ENCODE measurements at regions of chr18 and their contacts with region 1.

Region 1: DNA sequence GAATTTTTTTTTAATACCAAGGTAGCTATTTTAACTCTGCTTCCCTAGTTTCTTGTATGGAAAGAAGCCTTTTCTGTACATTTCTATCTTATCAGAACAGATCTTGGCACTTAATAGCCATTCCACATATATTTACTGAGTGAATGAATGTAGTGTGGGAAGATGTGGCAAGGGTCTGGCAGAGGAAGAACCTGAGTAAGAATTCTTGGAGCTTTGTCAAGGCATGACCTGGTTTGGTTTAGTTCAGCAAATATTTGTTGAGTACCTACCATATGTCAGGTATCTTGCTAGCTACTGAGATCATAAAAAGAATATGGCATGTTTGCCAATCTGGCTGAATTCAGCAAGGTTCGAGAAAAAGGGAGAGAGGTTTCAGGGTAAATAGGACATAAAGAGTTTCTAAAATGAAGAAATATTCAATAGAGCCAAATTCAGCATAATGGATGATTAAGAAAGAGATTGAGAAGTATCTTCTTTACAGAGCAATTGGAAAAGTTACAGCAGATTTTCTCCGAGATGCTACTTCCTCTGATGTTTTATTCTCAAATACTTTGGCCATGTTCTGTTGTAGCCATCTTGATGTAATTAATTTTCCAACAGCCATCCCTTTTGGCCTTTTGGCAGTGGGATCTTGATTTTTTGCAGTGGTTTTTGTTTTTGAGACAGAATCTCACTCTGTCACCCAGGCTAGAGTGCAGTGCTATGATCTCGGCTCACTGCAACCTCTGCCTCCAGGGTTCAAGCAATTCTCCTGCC is 21.7 kb upstream of the MEP1B start:
- DNase-seq: no peak
- H3K4me3 ChIP-seq: no peak overlapping the region
- H3K27ac ChIP-seq: no peak overlapping the region
- H3K4me1 ChIP-seq: no peaks in the 10 kb centered on the region
- H3K27me3 ChIP-seq: no peaks in the 10 kb centered on the region
- CTCF ChIP-seq: no peak

Region 2: DNA sequence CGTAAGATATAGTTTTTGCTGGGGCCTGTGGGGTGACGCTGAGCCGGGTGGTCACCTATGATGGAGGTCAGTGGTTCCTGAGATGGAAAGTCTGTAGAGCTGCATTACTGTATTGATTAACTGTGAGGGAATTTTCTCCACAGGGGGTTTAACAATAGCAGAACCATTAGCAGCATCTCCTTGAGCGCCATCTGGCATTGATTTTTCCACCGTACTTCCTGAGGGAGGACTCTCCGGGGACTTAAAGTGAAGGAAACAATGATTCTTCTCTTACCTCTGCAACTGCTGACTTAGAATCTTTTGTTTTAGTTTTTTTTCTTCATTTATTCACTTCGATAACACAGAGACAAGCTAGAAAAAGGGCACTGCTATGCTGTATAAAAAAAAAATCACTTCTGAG is 172.1 kb before region 1 on chr18:
- CTCF ChIA-PET with region 1: interaction called, 11 read pairs
- POLR2A ChIA-PET with region 1: no interaction called
- intact Hi-C with region 1: no loop called
- DNase-seq: peak; percentile 20
- H3K4me3 ChIP-seq: no peak overlapping the region
- H3K27ac ChIP-seq: no peak overlapping the region
- H3K4me1 ChIP-seq: no peaks in the 10 kb centered on the region
- H3K27me3 ChIP-seq: no peaks in the 10 kb centered on the region
- CTCF ChIP-seq: no peak

Region 3: DNA sequence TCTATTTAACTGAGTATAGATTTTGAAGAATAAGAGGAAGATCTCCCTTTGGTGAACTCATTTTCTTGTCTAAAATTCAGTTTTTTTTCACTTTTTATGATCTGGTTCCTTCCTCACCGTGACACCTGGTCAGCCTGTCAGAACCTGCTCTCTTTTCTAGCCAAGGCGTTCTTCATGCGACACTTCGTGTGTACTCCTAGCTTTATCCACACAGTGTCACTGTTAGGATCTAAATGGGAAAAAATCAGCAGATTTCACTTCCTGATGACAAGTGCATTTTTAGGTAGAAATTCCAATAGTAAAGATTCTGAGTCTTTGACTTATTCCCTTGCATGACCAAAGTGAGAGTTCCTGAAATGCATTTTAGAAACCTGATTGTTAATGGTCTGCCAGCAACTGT is 514.9 kb after region 1 on chr18:
- CTCF ChIA-PET with region 1: no interaction called
- POLR2A ChIA-PET with region 1: no interaction called
- intact Hi-C with region 1: loop called (anchors 10 kb)
- DNase-seq: no peak
- H3K4me3 ChIP-seq: no peak overlapping the region
- H3K27ac ChIP-seq: no peak overlapping the region
- H3K4me1 ChIP-seq: no peaks in the 10 kb centered on the region
- H3K27me3 ChIP-seq: no peaks in the 10 kb centered on the region
- CTCF ChIP-seq: peak; percentile 23; the same call in 1 of the 2 replicates